ENCODE measurements at regions of chr10 and their contacts with region 1.

Region 1: DNA sequence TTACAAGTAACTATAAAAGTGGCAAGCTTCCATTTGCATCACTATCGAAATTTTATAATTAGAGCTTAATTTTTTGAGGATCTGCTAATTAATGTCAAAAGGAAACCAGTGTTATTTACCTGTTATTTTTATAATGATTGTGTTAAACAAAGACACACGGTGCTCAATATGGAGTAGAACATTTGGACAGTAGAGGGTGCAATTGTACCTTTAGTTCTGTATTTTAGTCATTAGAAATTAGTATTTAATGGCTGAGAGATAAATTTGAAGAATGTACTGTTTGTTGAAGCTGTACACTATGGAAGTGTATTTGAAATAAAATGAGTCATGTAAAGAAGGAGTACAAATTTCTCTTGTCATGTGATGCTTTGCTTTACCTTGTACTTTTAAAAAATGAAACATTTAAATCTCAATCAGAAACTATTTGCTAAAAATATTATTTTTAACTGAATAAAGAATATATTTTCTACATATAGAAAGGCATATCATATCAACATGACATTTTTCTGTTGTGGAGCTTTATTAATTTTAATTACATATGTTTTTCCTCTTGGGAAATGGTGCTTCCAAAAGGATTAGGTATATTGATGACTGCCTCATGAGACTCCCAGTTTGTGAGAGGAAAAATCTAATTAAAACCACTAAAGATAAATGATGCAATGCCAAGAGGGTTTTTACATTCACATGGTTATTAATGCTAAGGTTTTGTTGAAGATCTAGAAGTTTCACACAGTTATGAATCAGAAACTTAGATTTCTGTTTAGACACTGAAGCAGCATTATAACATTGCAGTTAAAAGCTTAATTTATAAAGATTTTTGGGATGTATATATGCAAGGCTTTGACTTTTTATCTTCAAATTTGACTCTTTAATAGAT is 10.4 kb upstream of the PRKG1 start:
- DNase-seq: no peak
- H3K4me3 ChIP-seq: no peak overlapping the region
- H3K27ac ChIP-seq: no peak overlapping the region
- H3K4me1 ChIP-seq: no peaks in the 10 kb centered on the region
- H3K27me3 ChIP-seq: no peaks in the 10 kb centered on the region
- CTCF ChIP-seq: peak in 1 of 3 donors; percentile 62
- EP300 ChIP-seq: no peak
- POLR2A ChIP-seq: no peak

Region 2: GRCh38 chr10:50641631-50642030 is 422.3 kb before region 1 on chr10:
- intact Hi-C with region 1: no loop called
- DNase-seq: no peak
- H3K4me3 ChIP-seq: no peak overlapping the region
- H3K27ac ChIP-seq: no peak overlapping the region
- H3K4me1 ChIP-seq: no peaks in the 10 kb centered on the region
- H3K27me3 ChIP-seq: no peaks in the 10 kb centered on the region
- CTCF ChIP-seq: no peak
- EP300 ChIP-seq: no peak
- POLR2A ChIP-seq: no peak

Region 3: GRCh38 chr10:51960494-51960895 is 896.6 kb after region 1 on chr10:
- intact Hi-C with region 1: loop called in 1 of 4 experiments (anchors 5 kb)
- DNase-seq: no peak
- H3K4me3 ChIP-seq: no peak overlapping the region
- H3K27ac ChIP-seq: no peak overlapping the region
- H3K4me1 ChIP-seq: no peaks in the 10 kb centered on the region
- H3K27me3 ChIP-seq: no peaks in the 10 kb centered on the region
- CTCF ChIP-seq: peak in 2 of 3 donors; percentile 38 to 54
- EP300 ChIP-seq: no peak
- POLR2A ChIP-seq: no peak

Region 4: GRCh38 chr10:52215745-52216361 is 1152.0 kb after region 1 on chr10:
- intact Hi-C with region 1: loop called in 1 of 4 experiments (anchors 10 kb)
- DNase-seq: peak in 3 of 5 donors; percentile 15 to 60 (median 29)
- H3K4me3 ChIP-seq: no peak overlapping the region
- H3K27ac ChIP-seq: no peak overlapping the region
- H3K4me1 ChIP-seq: no peaks in the 10 kb centered on the region
- H3K27me3 ChIP-seq: no peaks in the 10 kb centered on the region
- CTCF ChIP-seq: peak; percentile 40 to 83 (median 51)
- EP300 ChIP-seq: no peak
- POLR2A ChIP-seq: no peak

Measured in ovary (tissue), 10 donors.